Esophagus muscularis mucosa (tissue), 4 donors: ENCODE measurements at regions of chr4 and their contacts with region 1.

Region 1: DNA sequence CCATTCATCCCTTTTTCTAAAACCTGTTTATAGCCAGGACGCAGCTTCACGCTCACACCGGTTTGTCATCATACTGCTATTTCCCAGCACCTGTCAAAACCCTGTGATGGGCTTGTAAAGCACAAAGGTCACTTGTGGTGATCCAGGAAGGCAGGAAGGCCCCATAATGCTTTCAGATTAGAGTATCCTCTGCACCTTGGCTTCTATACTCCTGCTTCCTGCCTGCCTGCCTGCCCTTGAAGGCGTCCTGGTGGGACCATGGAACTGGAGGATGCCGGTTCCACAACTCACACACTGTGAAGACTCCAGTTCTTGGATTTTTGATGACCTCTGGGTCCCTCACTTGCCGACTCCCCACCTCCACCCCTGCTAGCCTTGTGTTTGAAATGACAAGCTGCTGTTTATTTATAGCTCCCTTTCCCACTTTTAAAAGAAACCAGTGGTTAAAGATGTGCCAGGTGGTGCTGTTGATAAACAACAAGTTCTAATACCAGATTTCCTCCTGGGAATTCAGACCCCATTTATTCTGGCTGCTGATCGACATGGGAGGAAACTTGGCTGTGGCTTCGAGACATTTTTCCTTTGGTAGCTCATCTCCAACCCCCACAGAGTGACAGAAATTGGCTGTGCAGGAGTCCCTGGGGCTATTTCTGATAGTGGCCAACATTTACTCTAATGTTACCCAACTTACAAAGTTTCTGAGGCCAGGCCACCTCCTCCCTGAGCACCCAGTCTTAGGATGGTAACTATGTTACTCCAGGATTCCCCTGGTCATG is 211.5 kb downstream of the KDR start:
- DNase-seq: no peak
- H3K4me3 ChIP-seq: no peak overlapping the region
- H3K27ac ChIP-seq: no peak overlapping the region
- H3K4me1 ChIP-seq: peaks cover 3 to 16% (median 9%) of the 10 kb centered on the region in 4 donors
- H3K27me3 ChIP-seq: no peaks in the 10 kb centered on the region
- CTCF ChIP-seq: no peak
- EP300 ChIP-seq: no peak
- POLR2A ChIP-seq: no peak

Region 2: GRCh38 chr4:54855191-54855854 is 58.6 kb before region 1 on chr4:
- intact Hi-C with region 1: loop called (anchors 10 kb)
- DNase-seq: no peak
- H3K4me3 ChIP-seq: no peak overlapping the region
- H3K27ac ChIP-seq: no peak overlapping the region
- H3K4me1 ChIP-seq: peaks cover 0 to 13% (median 7%) of the 10 kb centered on the region in 4 donors
- H3K27me3 ChIP-seq: no peaks in the 10 kb centered on the region
- CTCF ChIP-seq: no peak
- EP300 ChIP-seq: no peak
- POLR2A ChIP-seq: no peak

Region 3: GRCh38 chr4:54999003-54999402 is 85.1 kb after region 1 on chr4:
- intact Hi-C with region 1: no loop called
- DNase-seq: no peak
- H3K4me3 ChIP-seq: no peak overlapping the region
- H3K27ac ChIP-seq: no peak overlapping the region
- H3K4me1 ChIP-seq: peaks cover 0 to 32% (median 24%) of the 10 kb centered on the region in 4 donors
- H3K27me3 ChIP-seq: no peaks in the 10 kb centered on the region
- CTCF ChIP-seq: peak; percentile 59 to 77 (median 72)
- EP300 ChIP-seq: no peak
- POLR2A ChIP-seq: no peak